ENCODE measurements at regions of chr14 and their contacts with region 1.

Region 1: GRCh38 chr14:102917469-102918211 is 4.8 kb upstream of the AMN start:
- DNase-seq: peak; percentile 24
- ATAC-seq: peak; percentile 74
- H3K4me3 ChIP-seq: no peak overlapping the region
- H3K27ac ChIP-seq: no peak overlapping the region
- H3K4me1 ChIP-seq: no peaks in the 10 kb centered on the region
- H3K27me3 ChIP-seq: peaks cover 9% of the 10 kb centered on the region
- CTCF ChIP-seq: peak; percentile 72
- POLR2A ChIP-seq: no peak
- RAD21 ChIP-seq: peak; percentile 74

Region 2: DNA sequence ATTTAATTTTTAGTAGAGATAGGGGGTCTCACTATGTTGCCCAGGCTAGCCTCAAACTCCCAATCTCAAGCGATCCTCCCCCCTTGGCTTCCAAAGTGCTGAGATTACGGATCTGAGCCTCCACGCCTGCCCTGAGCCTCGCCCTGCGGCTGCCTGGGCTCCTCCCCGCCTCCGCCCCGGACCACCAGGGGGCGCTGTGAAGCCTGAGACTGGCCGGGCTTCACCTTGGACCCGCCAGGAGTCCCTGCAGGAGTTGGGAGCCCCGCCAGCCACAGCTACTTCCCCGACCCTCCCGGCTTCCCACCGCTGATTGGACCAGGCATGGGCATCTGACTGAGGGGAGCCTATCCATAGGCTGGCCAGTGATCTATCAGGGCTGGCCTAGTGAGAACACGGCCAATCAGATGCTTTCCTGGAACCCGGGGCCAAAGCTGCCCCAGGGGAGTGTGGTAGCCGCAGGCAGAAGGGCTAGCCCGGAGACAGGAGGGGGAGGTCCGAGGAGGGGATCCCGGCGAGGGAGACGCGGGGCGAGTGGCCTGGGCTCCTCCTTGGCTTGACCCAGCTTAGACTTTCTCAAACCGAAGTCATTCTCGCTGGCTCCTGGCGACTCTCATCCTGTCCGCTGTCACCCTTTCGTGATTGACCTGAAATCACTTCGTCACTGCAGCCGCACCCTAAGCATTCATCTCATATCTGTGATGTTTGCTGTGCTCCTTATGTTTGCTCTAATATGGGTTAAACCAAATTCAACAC is 393.0 kb before region 1 on chr14:
- CTCF ChIA-PET with region 1: no interaction called
- POLR2A ChIA-PET with region 1: no interaction called
- dilution Hi-C with region 1: no loop called
- in situ Hi-C with region 1: no loop called
- intact Hi-C with region 1: loop called (anchors 5 kb)
- DNase-seq: peak; percentile 98
- ATAC-seq: peak; percentile 99
- H3K4me3 ChIP-seq: peak overlapping the region; percentile 62
- H3K27ac ChIP-seq: peak overlapping the region; percentile 62
- H3K4me1 ChIP-seq: peaks cover 6% of the 10 kb centered on the region; the same call in 1 of the 2 replicates
- H3K27me3 ChIP-seq: no peaks in the 10 kb centered on the region
- CTCF ChIP-seq: peak; percentile 99
- POLR2A ChIP-seq: peak; percentile 33; the same call in 1 of the 2 replicates
- RAD21 ChIP-seq: peak; percentile 88

Region 3: GRCh38 chr14:102774391-102775153 is 143.1 kb before region 1 on chr14:
- CTCF ChIA-PET with region 1: interaction called, 4 read pairs
- POLR2A ChIA-PET with region 1: no interaction called
- dilution Hi-C with region 1: no loop called
- in situ Hi-C with region 1: loop called (anchors 10 kb)
- intact Hi-C with region 1: loop called (anchors 1 kb)
- DNase-seq: peak; percentile 78
- ATAC-seq: peak; percentile 56
- H3K4me3 ChIP-seq: no peak overlapping the region
- H3K27ac ChIP-seq: no peak overlapping the region
- H3K4me1 ChIP-seq: peaks cover 10% of the 10 kb centered on the region
- H3K27me3 ChIP-seq: peaks cover 3% of the 10 kb centered on the region; the same call in 1 of the 2 replicates
- CTCF ChIP-seq: peak; percentile 85
- POLR2A ChIP-seq: no peak
- RAD21 ChIP-seq: peak; percentile 76

Region 4: GRCh38 chr14:103663506-103663905 is 745.9 kb after region 1 on chr14:
- CTCF ChIA-PET with region 1: no interaction called
- POLR2A ChIA-PET with region 1: no interaction called
- dilution Hi-C with region 1: no loop called
- in situ Hi-C with region 1: no loop called
- intact Hi-C with region 1: no loop called
- DNase-seq: no peak
- ATAC-seq: peak; percentile 9
- H3K4me3 ChIP-seq: no peak overlapping the region
- H3K27ac ChIP-seq: peak overlapping the region; percentile 85
- H3K4me1 ChIP-seq: peaks cover 18% of the 10 kb centered on the region
- H3K27me3 ChIP-seq: no peaks in the 10 kb centered on the region
- CTCF ChIP-seq: no peak
- POLR2A ChIP-seq: no peak
- RAD21 ChIP-seq: no peak

Measured in IMR-90 (cell line).